HCT116 (cell line): ENCODE measurements at regions of chr1 and their contacts with region 1.

Region 1: GRCh38 chr1:67753776-67754525 is 69.0 kb downstream of the GADD45A start:
- DNase-seq: peak; percentile 71
- ATAC-seq: peak; percentile 77
- H3K4me3 ChIP-seq: peak overlapping the region in 1 of 2 experiments; percentile 28; a peak in 2 of 4 replicates
- H3K27ac ChIP-seq: no peak overlapping the region
- H3K4me1 ChIP-seq: peaks cover 44 to 62% of the 10 kb centered on the region in 2 experiments
- H3K27me3 ChIP-seq: no peaks in the 10 kb centered on the region
- CTCF ChIP-seq: no peak
- POLR2A ChIP-seq: no peak
- RAD21 ChIP-seq: no peak

Region 2: GRCh38 chr1:67561704-67562113 is 192.2 kb before region 1 on chr1:
- CTCF ChIA-PET with region 1: interaction called, 15 read pairs
- POLR2A ChIA-PET with region 1: no interaction called
- RAD21 ChIA-PET with region 1: no interaction called
- intact Hi-C with region 1: no loop called
- DNase-seq: peak; percentile 77
- ATAC-seq: peak; percentile 93
- H3K4me3 ChIP-seq: no peak overlapping the region
- H3K27ac ChIP-seq: no peak overlapping the region
- H3K4me1 ChIP-seq: peaks cover 8 to 25% of the 10 kb centered on the region in 2 experiments; a peak in 3 of 4 replicates
- H3K27me3 ChIP-seq: no peaks in the 10 kb centered on the region
- CTCF ChIP-seq: peak; percentile 84 to 93 (median 91)
- POLR2A ChIP-seq: no peak
- RAD21 ChIP-seq: peak; percentile 93